Activated T-helper 1 cell treated with anti-CD3 and anti-CD28 coated beads, Interleukin-12 subunit alpha, Interleukin-12 subunit beta, Interleukin-2, Interleukin-4 antibody, amounts not matched to agents 30 ng/mL and 10 ng/mL and 1 ng/mL, durations not matched to agents 14 hours and 24 hours and 36 hours (primary cell): ENCODE measurements at regions of chr4 and their contacts with region 1.

Region 1: GRCh38 chr4:35725131-35725530 is 519.2 kb downstream of the ARAP2 start:
- DNase-seq: no peak
- H3K4me3 Mint-ChIP-seq: no peak overlapping the region
- H3K27ac Mint-ChIP-seq: no peak overlapping the region
- H3K4me1 Mint-ChIP-seq: no peaks in the 10 kb centered on the region
- H3K27me3 Mint-ChIP-seq: no peaks in the 10 kb centered on the region

Region 2: DNA sequence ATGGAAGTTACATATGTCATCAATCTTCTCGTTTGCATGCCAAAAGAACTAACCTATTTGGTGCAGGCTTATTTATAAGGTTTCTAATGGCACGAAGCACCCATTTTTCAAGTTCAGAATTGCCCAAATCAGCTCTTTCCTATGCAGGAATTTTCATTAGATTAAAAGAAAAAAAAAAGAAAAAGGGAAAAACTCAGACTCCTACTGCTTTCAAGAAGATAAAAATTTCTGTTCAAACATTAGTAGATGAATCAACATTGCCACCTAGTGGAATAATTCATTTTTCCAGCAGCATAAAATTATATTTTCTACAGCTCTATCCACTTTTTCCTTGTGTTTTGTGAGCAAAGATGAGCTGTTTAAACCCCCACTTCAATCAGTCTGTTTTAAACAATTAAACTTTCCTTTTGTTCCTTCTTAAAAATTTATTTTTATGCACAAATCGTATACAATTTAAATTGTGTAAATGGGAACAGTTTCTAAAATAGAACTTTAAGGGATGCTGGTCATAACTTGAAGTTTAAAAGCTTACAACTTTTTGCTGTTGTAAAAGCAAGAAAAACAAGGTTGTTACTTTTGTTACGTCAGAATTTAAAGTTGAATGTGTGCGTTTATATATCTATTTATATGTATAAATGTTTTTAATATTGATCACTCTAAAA is 209.3 kb after region 1 on chr4:
- intact Hi-C with region 1: loop called (anchors 10 kb)
- DNase-seq: no peak
- H3K4me3 Mint-ChIP-seq: no peak overlapping the region
- H3K27ac Mint-ChIP-seq: no peak overlapping the region
- H3K4me1 Mint-ChIP-seq: no peaks in the 10 kb centered on the region
- H3K27me3 Mint-ChIP-seq: peaks cover 9% of the 10 kb centered on the region